Esophagus squamous epithelium (tissue), 5 donors: ENCODE measurements at regions of chr6 and their contacts with region 1.

Region 1: DNA sequence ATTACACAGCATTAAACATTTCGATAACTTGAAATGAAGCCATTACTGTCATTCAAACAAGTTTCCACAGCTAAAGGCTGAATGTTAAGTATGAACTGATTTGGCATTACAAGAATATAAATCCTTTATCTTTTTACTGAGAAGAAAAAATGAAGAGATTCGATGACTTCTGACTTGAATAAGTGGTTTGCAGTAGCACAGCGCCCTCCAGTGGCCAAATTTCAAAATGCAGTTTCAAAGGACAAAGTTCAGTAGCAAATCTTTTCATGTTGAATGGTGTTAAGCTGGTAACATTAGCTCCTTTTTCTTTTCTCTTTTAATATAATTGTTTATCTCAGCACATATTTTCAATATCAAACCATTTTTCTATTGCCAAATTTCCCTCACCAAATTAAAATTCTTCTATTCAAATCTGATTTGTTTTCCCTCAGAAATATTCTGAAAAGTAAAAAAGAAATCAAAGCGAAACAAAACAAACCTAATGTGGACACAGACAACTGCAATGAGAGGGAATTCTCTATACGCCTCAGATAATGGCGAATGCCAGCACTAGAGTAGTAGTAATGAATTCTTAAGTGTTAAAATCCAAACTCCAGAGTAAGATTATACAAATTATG is 145.7 kb downstream of the BTBD9 start:
- DNase-seq: no peak
- H3K4me3 ChIP-seq: no peak overlapping the region
- H3K27ac ChIP-seq: no peak overlapping the region
- H3K4me1 ChIP-seq: peaks cover 0 to 18% (median 0%) of the 10 kb centered on the region in 3 donors
- H3K27me3 ChIP-seq: no peaks in the 10 kb centered on the region
- CTCF ChIP-seq: peak; percentile 82 to 97 (median 90)
- POLR2A ChIP-seq: no peak

Region 2: DNA sequence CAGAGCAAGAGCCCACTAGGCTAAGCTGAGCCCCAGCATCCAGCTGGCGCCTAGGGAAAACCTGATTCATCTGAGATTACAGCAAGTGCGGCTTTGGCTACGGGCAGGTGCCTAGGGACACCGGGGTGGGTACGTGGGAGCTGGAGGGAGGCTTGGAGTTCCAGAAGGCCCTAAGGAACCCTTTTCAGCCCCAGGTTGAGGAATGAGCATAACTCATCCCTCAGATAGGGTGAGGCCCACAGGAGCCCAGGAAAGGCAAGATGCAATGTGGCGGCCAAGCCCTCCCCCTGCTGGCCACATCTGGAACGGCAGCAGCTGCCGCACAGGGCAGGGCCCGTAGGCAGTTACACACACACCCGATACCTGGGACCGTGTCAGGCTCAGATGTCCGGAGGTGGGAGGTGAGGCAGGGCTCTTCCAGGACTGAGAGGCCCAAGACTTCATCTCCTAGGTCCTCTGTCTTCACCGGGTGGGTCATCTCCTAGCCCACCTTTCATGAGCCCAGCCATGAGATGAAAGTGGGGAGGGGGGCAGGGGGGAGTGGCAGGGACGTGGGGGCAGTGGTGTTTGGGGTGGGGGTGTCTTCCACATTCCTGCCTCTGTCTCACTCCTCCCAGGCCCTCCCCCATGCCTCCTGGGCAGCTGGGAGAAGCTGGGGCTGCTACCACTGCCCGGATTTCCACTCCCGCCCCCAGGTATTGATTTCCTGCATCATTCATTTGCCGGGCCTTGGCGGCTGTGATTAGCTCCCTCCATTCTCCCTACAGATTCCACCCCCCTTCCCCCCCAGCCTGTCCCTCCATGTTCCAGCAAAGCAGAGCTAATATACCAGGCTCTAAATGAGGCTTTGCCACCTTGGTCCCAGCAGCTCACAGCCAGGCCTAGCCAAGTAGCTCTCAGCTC is 801.9 kb before region 1 on chr6:
- intact Hi-C with region 1: loop called (anchors 10 kb)
- DNase-seq: no peak
- H3K4me3 ChIP-seq: no peak overlapping the region
- H3K27ac ChIP-seq: no peak overlapping the region
- H3K4me1 ChIP-seq: peaks cover 16 to 52% (median 31%) of the 10 kb centered on the region in 3 donors
- H3K27me3 ChIP-seq: peaks cover 0 to 50% (median 0%) of the 10 kb centered on the region in 4 donors
- CTCF ChIP-seq: peak; percentile 96 to 99 (median 98)
- POLR2A ChIP-seq: no peak

Region 3: GRCh38 chr6:38460186-38460585 is 33.9 kb before region 1 on chr6:
- intact Hi-C with region 1: no loop called
- DNase-seq: no peak
- H3K4me3 ChIP-seq: no peak overlapping the region
- H3K27ac ChIP-seq: no peak overlapping the region
- H3K4me1 ChIP-seq: no peaks in the 10 kb centered on the region
- H3K27me3 ChIP-seq: no peaks in the 10 kb centered on the region
- CTCF ChIP-seq: no peak
- POLR2A ChIP-seq: no peak